ENCODE measurements at regions of chr3 and their contacts with region 1.

Region 1: GRCh38 chr3:45978006-45978761 is 17.4 kb downstream of the FYCO1 start:
- DNase-seq: peak; percentile 58
- H3K4me3 Mint-ChIP-seq: peak overlapping the region; percentile 81
- H3K27ac Mint-ChIP-seq: peak overlapping the region; percentile 98
- H3K4me1 Mint-ChIP-seq: peaks cover 74% of the 10 kb centered on the region
- H3K27me3 Mint-ChIP-seq: no peaks in the 10 kb centered on the region

Region 2: DNA sequence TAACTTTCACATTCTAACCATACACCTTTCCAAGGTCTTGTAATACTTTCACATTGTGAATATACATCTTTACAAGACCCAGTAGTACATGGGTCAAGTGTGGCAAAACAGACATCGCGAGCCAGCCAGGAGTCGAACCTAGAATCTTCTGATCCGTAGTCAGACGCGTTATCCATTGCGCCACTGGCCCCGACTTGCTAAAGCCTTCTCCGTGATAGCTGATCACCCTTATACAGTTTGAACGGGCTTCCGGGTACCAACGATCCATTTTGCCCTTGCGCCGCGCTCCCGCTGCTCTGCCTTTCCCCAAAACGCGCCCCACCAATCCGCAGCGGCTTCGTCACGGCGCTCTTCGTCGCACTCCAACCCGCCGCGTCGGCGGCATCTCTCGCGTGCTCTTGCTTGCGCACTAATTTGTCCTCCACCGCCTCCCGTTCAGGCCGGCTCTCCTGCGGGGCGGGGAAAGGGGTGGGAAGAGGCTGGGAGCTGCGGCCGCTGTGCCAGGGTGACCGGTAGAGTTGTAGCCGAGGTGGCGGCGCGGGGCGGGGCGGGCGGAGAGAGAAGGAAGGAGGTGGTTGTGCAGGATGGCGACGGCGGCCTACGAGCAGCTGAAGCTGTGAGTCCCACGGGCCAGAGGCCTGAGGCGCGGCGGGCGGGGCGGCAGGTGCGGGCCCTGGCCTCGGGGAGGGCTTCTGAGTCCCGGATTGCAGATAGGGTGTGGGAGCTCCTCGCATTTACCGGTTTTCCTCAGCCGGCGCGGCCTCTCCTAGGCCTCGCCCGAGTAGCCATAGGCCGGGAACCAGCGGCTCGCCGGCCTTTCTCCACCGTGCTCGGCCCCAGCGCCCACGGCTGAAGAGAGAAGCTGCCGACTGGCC is 289.1 kb before region 1 on chr3 and contains the start of gene SACM1L:
- intact Hi-C with region 1: loop called (anchors 5 kb)
- DNase-seq: peak; percentile 97
- H3K4me3 Mint-ChIP-seq: peak within 1 kb of the TSS; percentile 93
- H3K27ac Mint-ChIP-seq: peak within 1 kb of the TSS; percentile 93
- H3K4me1 Mint-ChIP-seq: peaks cover 40% of the 10 kb centered on the region
- H3K27me3 Mint-ChIP-seq: peaks cover 2% of the 10 kb centered on the region
- total RNA-seq, gene SACM1L: 105 and 107 TPM in 2 replicates

Region 3: GRCh38 chr3:45950686-45951600 is 27.2 kb before region 1 on chr3:
- intact Hi-C with region 1: loop called (anchors 2 kb)
- DNase-seq: no peak
- H3K4me3 Mint-ChIP-seq: no peak overlapping the region
- H3K27ac Mint-ChIP-seq: peak overlapping the region; percentile 78
- H3K4me1 Mint-ChIP-seq: peaks cover 76% of the 10 kb centered on the region
- H3K27me3 Mint-ChIP-seq: no peaks in the 10 kb centered on the region

Region 4: GRCh38 chr3:45995236-45996192 is 17.3 kb after region 1 on chr3 and contains the start of gene FYCO1:
- intact Hi-C with region 1: loop called (anchors 1 kb)
- DNase-seq: peak; percentile 80
- H3K4me3 Mint-ChIP-seq: peak within 1 kb of the TSS; percentile 85
- H3K27ac Mint-ChIP-seq: peak within 1 kb of the TSS; percentile 95
- H3K4me1 Mint-ChIP-seq: peaks cover 44% of the 10 kb centered on the region
- H3K27me3 Mint-ChIP-seq: peaks cover 13% of the 10 kb centered on the region
- total RNA-seq, gene FYCO1: 19.6 and 20.2 TPM in 2 replicates

Region 5: DNA sequence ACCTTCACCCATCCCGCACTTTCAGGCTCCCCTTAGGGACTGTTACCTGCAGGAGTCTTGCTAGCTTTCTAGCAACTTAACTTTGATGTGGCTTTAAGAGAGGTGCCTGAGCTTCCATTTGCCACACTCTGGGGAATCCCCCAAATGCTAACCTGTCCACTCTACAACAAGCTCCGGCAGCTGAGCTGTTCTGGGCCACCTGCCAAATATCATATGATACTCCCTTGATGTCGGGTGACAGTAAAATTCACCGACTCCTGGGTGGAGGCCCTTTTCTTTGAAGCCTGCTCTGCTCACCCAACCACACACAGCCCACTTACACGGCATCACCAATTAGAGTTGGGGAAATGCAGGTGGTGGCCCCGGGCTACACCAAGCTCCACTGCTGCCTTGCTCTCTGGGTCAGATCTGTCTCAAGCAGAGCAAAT is 87.1 kb after region 1 on chr3:
- intact Hi-C with region 1: loop called (anchors 1 kb)
- DNase-seq: peak; percentile 56
- H3K4me3 Mint-ChIP-seq: no peak overlapping the region
- H3K27ac Mint-ChIP-seq: peak overlapping the region; percentile 6
- H3K4me1 Mint-ChIP-seq: peaks cover 47% of the 10 kb centered on the region
- H3K27me3 Mint-ChIP-seq: peaks cover 52% of the 10 kb centered on the region

Region 6: GRCh38 chr3:46110701-46111493 is 132.7 kb after region 1 on chr3:
- intact Hi-C with region 1: no loop called
- DNase-seq: no peak
- H3K4me3 Mint-ChIP-seq: no peak overlapping the region
- H3K27ac Mint-ChIP-seq: no peak overlapping the region
- H3K4me1 Mint-ChIP-seq: peaks cover 31% of the 10 kb centered on the region
- H3K27me3 Mint-ChIP-seq: peaks cover 41% of the 10 kb centered on the region

Measured in activated T-helper 2 cell treated with anti-CD3 and anti-CD28 coated beads, Interferon-gamma antibody, Interleukin-2, Interleukin-4, amounts not matched to agents 10 μg/mL and 5 μg/mL and 100 μg/mL, durations not matched to agents 14 hours and 24 hours and 36 hours (primary cell).